Activated T-helper 2 cell treated with anti-CD3 and anti-CD28 coated beads, Interferon-gamma antibody, Interleukin-2, Interleukin-4, amounts not matched to agents 10 μg/mL and 5 μg/mL and 100 μg/mL, durations not matched to agents 14 hours and 24 hours and 36 hours (primary cell): ENCODE measurements at regions of chr11 and their contacts with region 1.

Region 1: GRCh38 chr11:110376711-110377324 is 52.9 kb upstream of the FDX1 start:
- DNase-seq: no peak
- H3K4me3 Mint-ChIP-seq: no peak overlapping the region
- H3K27ac Mint-ChIP-seq: peak overlapping the region; percentile 21
- H3K4me1 Mint-ChIP-seq: peaks cover 28% of the 10 kb centered on the region
- H3K27me3 Mint-ChIP-seq: peaks cover 2% of the 10 kb centered on the region

Region 2: GRCh38 chr11:109946322-109946846 is 430.4 kb before region 1 on chr11:
- intact Hi-C with region 1: loop called (anchors 5 kb)
- DNase-seq: peak; percentile 49
- H3K4me3 Mint-ChIP-seq: peak overlapping the region; percentile 43
- H3K27ac Mint-ChIP-seq: peak overlapping the region; percentile 65
- H3K4me1 Mint-ChIP-seq: peaks cover 14% of the 10 kb centered on the region
- H3K27me3 Mint-ChIP-seq: peaks cover 28% of the 10 kb centered on the region

Region 3: GRCh38 chr11:110077831-110078325 is 298.9 kb before region 1 on chr11:
- intact Hi-C with region 1: loop called (anchors 1 kb)
- DNase-seq: peak; percentile 49
- H3K4me3 Mint-ChIP-seq: peak overlapping the region; percentile 47
- H3K27ac Mint-ChIP-seq: peak overlapping the region; percentile 96
- H3K4me1 Mint-ChIP-seq: peaks cover 40% of the 10 kb centered on the region
- H3K27me3 Mint-ChIP-seq: peaks cover 4% of the 10 kb centered on the region

Region 4: DNA sequence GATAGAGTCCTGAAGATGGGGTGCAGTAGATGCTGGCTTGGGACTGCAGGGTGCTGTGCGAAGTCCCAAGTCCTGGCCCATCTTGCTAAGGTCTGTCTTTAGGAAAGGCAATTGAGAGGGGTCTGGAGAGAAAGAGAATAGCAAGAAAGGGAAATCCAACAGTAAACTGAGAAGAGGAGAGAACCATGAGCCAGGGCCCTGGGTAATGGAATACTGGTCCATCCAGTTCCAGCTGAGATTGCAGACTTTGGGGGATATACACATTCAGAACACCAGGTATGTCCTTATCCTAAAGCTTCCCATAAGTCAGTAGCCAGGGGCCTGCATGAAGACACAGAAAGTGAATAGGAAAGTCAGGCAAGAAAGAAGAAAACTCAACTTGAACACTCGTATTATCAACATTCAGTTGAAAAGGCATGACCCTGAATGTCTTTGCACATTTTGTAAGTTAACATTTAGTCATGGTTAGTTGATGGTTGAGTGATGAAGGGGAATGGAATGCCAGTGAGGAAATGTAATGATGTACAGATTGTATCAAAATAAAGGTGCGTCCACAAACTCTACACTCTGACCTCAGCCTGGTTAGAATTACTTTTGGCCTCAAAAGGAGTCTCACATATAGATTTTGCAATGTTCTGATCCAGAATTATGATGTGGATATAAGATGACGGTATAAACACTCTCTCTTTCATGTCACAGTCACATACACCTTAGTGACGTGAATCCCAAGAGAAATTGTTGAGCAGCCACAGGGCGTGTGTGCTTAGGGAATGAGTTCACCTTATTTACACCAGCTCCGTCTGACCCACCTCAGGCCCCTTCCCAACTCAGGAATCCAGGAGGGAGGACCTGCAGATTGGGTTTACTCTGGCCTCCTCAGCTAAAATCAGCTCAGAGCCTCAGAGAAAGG is 180.7 kb before region 1 on chr11:
- intact Hi-C with region 1: loop called (anchors 1 kb)
- DNase-seq: no peak
- H3K4me3 Mint-ChIP-seq: no peak overlapping the region
- H3K27ac Mint-ChIP-seq: no peak overlapping the region
- H3K4me1 Mint-ChIP-seq: peaks cover 21% of the 10 kb centered on the region
- H3K27me3 Mint-ChIP-seq: peaks cover 41% of the 10 kb centered on the region

Region 5: GRCh38 chr11:110327508-110327907 is 49.3 kb before region 1 on chr11:
- intact Hi-C with region 1: loop called (anchors 5 kb)
- DNase-seq: no peak
- H3K4me3 Mint-ChIP-seq: peak overlapping the region; percentile 87
- H3K27ac Mint-ChIP-seq: peak overlapping the region; percentile 89
- H3K4me1 Mint-ChIP-seq: peaks cover 34% of the 10 kb centered on the region
- H3K27me3 Mint-ChIP-seq: no peaks in the 10 kb centered on the region

Region 6: DNA sequence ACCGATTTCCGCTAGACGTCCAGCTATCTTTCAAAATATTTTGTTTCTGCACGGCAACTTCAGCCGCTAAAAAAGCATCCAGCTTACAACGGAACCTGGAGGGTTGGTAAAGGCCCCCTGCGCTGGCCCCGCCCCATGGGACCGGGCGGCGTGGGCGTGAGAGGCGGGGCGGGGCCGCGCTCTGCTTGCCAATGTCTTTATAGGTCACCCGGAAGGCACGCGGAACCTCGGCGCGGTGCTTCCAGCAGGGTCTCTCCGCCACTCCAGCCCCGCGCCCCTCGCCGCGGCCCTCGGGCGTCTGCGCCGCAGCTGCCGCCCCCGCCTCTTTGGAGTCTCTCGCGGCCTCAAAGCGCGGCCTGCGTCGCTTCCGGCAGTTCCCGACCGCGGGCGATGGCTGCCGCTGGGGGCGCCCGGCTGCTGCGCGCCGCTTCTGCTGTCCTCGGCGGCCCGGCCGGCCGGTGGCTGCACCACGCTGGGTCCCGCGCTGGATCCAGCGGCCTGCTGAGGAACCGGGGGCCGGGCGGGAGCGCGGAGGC is 53.0 kb after region 1 on chr11 and contains the start of gene FDX1:
- intact Hi-C with region 1: loop called (anchors 1 kb)
- DNase-seq: peak; percentile 78
- H3K4me3 Mint-ChIP-seq: peak within 1 kb of the TSS; percentile 98
- H3K27ac Mint-ChIP-seq: peak within 1 kb of the TSS; percentile 94
- H3K4me1 Mint-ChIP-seq: peaks cover 41% of the 10 kb centered on the region
- H3K27me3 Mint-ChIP-seq: no peaks in the 10 kb centered on the region
- total RNA-seq, gene FDX1: 13.0 and 13.1 TPM in 2 replicates